Right ventricle myocardium superior (tissue), 1 donor: ENCODE measurements at regions of chr11 and their contacts with region 1.

Region 1: DNA sequence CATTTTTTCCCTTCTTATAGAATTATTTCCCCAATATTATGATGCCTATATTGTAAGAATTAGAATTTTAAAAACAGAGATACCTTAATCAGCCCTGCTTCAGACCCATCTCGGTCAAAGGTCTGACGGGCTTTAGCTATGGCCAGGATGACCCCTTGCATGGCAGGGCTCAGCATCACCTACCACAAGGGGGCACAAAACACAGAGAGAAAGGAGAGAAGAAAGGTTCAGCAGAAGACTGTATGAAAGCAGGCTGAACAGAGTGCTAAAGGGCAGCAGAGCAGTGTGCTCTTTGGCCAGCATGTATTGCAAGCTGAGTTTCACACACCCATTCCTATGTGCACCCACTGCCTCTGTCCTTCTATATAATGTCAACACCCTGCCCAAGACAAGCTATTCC is 26.8 kb downstream of the CLDN25 start:
- DNase-seq: no peak
- ATAC-seq: peak; percentile 75

Region 2: DNA sequence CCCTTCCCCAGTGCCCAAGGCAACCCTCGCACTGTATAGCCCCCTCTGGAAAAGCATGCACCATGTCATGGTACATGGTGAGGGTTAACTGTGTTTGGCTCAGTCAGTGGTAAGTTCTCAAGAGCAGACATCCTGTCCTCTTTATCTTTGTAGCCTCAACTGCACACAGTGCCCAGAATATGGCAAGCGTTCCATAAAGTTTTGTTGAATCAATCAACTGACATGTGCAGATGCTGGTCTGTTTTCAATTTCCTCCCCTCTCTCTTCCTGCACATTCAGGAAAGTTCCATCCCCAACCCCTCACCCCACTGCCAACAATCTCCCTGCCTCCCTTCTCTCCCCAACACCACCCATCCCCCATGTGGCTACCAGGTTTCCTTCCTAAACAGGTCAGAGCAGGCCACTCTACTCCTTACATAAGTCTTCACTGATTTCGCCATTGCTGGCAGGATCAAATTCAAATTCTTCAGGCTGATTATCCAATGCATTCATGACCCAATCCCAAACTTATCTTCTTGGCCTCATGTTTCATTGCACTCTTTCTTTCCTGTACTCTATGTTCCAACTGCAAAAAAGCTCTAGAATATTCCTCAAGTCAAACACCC is 84.8 kb before region 1 on chr11:
- intact Hi-C with region 1: no loop called
- DNase-seq: no peak
- ATAC-seq: peak; percentile 36

Region 3: DNA sequence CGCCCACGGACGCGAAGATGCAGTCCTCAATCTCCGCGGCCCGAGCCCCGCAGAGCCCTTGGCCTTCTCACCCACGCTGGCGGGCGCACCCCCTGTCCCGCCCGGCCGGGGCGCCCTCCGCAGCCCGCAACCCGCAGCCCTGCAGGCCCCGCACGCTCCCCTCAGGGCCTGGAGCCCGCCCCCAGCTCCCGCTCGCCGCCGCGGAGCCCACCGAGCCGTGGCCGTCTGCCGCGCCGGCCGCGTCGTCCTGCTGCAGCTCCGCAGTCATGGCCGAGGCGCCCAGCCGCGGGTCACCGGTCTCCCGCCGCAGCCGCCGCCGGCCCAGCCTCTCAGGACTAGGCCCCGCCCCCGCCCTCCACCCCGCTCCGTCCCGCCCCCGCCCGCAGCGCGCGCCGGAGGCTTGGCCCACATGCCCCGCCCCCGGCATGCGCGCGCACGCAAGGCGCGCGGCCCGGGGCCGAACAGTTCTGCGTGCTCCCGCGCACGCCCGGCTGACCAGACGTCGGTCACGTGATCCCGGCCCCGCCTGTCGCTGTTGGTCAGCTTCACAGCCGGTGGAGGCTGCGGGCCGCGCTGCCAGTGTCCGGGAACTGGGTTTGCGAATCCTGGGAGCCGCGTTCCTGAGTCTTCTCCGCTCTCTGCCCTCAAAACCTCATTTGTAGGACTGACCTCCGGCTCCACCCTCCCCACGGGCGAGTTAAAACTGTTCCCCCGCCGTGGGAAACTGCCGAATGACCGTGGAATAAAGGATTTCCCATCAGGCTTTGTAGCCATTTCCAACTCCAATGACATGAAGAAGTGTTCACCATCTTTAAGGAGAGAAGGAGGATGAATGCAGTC is 69.0 kb after region 1 on chr11 and contains the start of gene USP28:
- intact Hi-C with region 1: loop called (anchors 10 kb)
- DNase-seq: peak; percentile 99
- ATAC-seq: peak; percentile 84
- total RNA-seq, gene USP28: 136 TPM

Region 4: GRCh38 chr11:113906038-113906437 is 99.6 kb after region 1 on chr11:
- intact Hi-C with region 1: no loop called
- DNase-seq: no peak
- ATAC-seq: no peak